HEK293T (cell line): ENCODE measurements at regions of chr17 and their contacts with region 1.

Region 1: GRCh38 chr17:42019509-42020404 is at the start of gene NKIRAS2:
- DNase-seq: peak; percentile 89

Region 2: GRCh38 chr17:41966463-41967140 is 53.2 kb before region 1 on chr17 and contains the start of gene CNP:
- CTCF ChIA-PET with region 1: interaction called, 9 read pairs
- POLR2A ChIA-PET with region 1: interaction called, 117 read pairs
- DNase-seq: peak; percentile 90

Region 3: GRCh38 chr17:42002792-42003301 is 16.9 kb before region 1 on chr17:
- CTCF ChIA-PET with region 1: no interaction called
- POLR2A ChIA-PET with region 1: interaction called, 34 read pairs
- DNase-seq: no peak

Region 4: DNA sequence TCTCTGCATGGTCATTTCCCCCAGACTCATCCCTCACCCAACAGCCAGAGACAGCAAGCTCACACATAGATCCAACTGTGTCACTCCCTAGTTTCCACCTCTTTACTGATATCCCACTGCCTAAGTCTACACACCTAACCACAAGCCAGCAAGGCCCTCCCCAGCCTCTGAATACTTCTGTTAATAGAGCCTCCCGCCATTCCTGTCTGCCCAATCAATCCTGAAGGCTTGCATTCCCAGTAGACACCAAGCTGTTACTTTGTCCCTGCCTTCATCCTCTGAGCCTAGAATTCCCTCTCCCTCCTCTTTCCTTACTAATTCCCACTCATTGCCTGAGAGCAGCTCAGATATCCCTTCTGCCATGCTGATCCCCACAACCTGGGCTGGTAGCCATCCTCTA is 26.0 kb after region 1 on chr17:
- CTCF ChIA-PET with region 1: interaction called, 4 read pairs
- POLR2A ChIA-PET with region 1: interaction called, 23 read pairs
- DNase-seq: no peak

Region 5: DNA sequence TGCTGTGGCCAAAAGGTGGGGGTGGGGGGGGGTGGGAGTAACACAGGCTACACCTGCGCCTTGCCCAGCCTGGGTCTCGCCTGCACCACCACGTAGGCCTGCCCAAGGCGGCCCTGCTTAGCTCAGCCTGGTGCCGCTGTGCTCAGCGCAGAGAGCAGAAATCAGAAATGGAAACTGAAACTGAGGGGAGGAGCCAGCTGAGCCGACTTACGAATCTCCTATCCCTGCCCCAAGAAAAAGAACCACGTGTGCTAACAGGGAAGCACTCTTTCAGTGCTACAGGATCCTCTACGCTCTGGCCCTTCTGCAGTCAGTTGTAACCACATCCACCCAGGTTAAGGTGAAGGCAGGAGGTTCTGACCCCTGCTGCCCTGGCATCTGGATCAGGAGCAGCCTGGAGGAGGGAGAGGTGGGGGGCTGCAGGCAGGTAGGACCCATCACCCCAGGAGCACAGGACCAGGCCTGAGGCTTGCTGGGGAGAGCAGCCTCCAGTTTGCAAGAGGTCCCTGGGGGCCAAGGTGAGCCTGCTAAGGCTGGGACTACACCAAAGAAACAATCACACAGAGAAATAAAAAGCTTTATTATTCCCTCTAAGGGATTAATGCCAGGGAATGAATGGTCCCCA is 92.9 kb after region 1 on chr17 and contains the start of gene DHX58:
- CTCF ChIA-PET with region 1: interaction called, 4 read pairs
- POLR2A ChIA-PET with region 1: interaction called, 20 read pairs
- DNase-seq: no peak